A673 (cell line): ENCODE measurements at regions of chr19 and their contacts with region 1.

Region 1: GRCh38 chr19:47417746-47418691 is 1.3 kb downstream of the MEIS3 start:
- DNase-seq: no peak
- H3K4me3 ChIP-seq: peak overlapping the region; percentile 52
- H3K27ac ChIP-seq: no peak overlapping the region
- H3K4me1 ChIP-seq: peaks cover 34% of the 10 kb centered on the region
- H3K27me3 ChIP-seq: peaks cover 18% of the 10 kb centered on the region
- CTCF ChIP-seq: no peak

Region 2: DNA sequence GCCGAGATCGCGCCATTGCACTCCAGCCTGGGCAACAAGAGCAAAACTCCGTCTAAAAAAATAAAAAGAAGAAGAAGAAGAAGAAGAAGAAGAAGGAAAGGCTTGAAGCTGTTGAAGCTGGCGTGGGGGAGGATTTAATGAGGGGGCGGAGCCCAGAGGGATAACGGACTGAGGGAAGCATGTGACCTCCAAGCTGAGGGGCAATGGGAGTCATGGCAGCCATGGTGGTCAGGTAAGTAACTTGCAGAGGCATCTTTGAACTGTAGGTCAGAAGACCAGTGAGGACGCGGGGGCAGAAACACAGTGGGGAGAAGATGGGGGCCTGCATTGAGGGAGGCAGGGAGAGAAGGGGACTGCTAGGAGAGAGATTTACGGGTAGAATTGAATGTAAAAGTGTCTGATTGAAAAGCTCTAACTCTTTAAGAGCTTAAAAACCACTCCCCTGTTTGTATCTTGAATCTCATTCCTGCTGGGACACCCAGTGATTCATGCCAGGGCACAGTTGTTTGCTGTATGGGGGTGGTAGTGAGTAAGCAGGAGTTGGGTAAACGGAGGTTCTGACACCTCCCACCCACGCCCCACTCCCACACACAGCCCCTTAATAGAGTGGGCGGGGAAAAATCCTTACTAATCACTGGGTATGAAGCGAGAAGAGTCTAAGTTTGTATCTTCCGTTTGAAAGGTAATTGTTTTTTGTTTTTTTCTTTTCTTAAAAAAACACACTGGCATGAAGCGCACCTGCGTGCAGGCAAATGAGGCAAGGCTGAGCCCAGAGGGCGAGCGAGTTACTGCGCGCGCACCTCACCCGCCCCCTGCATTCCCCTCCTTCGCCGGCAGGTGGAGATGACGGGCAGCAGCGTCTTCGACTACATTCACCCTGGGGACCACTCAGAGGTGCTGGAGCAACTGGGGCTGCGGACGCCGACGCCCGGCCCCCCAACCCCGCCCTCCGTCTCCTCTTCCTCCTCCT is 382.6 kb before region 1 on chr19:
- CTCF ChIA-PET with region 1: interaction called, 11 read pairs
- POLR2A ChIA-PET with region 1: no interaction called
- intact Hi-C with region 1: no loop called
- DNase-seq: peak; percentile 92
- H3K4me3 ChIP-seq: peak overlapping the region; percentile 56
- H3K27ac ChIP-seq: peak overlapping the region; percentile 57
- H3K4me1 ChIP-seq: peaks cover 8% of the 10 kb centered on the region
- H3K27me3 ChIP-seq: no peaks in the 10 kb centered on the region
- CTCF ChIP-seq: peak; percentile 94

Region 3: GRCh38 chr19:47469719-47470118 is 51.7 kb after region 1 on chr19:
- CTCF ChIA-PET with region 1: no interaction called
- POLR2A ChIA-PET with region 1: no interaction called
- intact Hi-C with region 1: no loop called
- DNase-seq: no peak
- H3K4me3 ChIP-seq: no peak overlapping the region
- H3K27ac ChIP-seq: no peak overlapping the region
- H3K4me1 ChIP-seq: peaks cover 9% of the 10 kb centered on the region
- H3K27me3 ChIP-seq: no peaks in the 10 kb centered on the region
- CTCF ChIP-seq: no peak